ENCODE measurements at regions of chr2 and their contacts with region 1.

Region 1: GRCh38 chr2:190648289-190649034 is 421 bp upstream of the NAB1 start:
- DNase-seq: peak; percentile 90 to 91
- H3K4me3 ChIP-seq: peak overlapping the region; percentile 99
- H3K4me3 Mint-ChIP-seq: peak overlapping the region; percentile 91
- H3K27ac Mint-ChIP-seq: peak overlapping the region; percentile 88
- H3K4me1 ChIP-seq: peaks cover 20% of the 10 kb centered on the region
- H3K4me1 Mint-ChIP-seq: peaks cover 16% of the 10 kb centered on the region
- H3K27me3 ChIP-seq: no peaks in the 10 kb centered on the region
- H3K27me3 Mint-ChIP-seq: no peaks in the 10 kb centered on the region
- CTCF ChIP-seq: no peak

Region 2: DNA sequence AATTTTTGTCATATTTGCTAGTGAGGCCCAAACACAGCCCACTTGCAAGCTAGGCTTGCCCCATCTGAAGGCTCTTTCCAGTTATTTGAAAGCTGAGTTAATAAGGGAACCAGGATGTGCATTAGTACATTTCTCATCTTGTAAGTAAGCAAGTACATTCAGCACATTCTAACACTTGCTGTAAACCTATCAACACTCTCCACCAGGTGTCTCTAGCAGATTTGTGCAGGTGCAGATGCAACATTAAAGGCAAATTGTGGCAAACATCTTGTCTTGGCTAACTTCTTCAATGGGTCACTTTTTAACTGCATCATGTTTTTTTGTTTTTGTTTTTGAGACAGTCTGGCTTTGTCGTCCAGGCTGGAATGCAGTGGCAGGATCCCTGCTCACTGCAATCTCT is 265.6 kb before region 1 on chr2:
- CTCF ChIA-PET with region 1: no interaction called
- POLR2A ChIA-PET with region 1: no interaction called
- intact Hi-C with region 1: loop called (anchors 10 kb)
- DNase-seq: peak; percentile 48 to 61
- H3K4me3 ChIP-seq: no peak overlapping the region
- H3K4me3 Mint-ChIP-seq: no peak overlapping the region
- H3K27ac Mint-ChIP-seq: no peak overlapping the region
- H3K4me1 ChIP-seq: peaks cover 13% of the 10 kb centered on the region
- H3K4me1 Mint-ChIP-seq: peaks cover 7% of the 10 kb centered on the region
- H3K27me3 ChIP-seq: no peaks in the 10 kb centered on the region
- H3K27me3 Mint-ChIP-seq: no peaks in the 10 kb centered on the region
- CTCF ChIP-seq: peak; percentile 60 to 75

Region 3: DNA sequence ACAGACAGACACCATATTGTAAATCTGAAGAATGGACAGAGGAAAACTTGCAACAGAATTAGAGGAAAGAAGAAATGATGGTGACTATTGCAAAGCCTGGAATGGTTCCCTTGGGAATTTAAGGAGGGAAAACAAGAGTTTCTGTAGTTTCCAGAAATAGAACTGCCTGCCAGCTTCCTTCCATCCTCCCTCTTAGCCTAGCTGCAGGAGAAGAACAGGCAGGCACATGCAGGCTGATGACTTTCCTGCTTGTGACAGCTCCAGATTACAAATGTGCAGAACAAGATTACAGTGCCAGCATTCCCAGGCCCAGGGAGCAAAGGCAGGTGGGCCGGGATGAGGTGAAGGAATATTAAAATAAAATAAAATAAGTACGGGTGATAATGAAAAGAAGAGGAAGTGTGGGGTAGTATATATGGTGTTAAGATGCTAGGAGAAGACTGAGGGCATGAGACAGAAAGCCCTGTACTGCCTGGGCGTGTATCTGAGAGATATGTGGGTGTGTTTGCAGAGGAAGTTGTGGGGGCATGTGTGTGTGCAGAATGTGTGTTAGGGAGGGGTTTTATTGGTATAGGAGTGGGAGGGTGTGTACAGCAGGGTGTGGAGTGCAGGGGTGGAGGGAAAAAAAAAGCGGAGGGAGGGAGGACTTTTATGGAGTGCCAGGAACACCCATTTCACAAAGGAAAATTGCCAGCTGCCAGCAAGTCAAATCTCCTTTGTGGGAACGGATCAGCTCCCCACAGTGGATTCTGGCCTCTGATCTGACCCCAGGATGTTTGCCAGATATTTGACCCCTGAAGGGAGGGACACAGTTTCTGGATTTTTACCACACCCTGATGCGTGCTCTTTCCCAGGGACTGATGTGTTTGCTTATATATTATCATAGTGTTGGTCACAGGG is 70.1 kb before region 1 on chr2:
- CTCF ChIA-PET with region 1: no interaction called
- POLR2A ChIA-PET with region 1: no interaction called
- intact Hi-C with region 1: loop called (anchors 1 kb)
- DNase-seq: peak; percentile 74 to 91
- H3K4me3 ChIP-seq: no peak overlapping the region
- H3K4me3 Mint-ChIP-seq: peak overlapping the region; percentile 56
- H3K27ac Mint-ChIP-seq: peak overlapping the region; percentile 65
- H3K4me1 ChIP-seq: peaks cover 36% of the 10 kb centered on the region
- H3K4me1 Mint-ChIP-seq: peaks cover 33% of the 10 kb centered on the region
- H3K27me3 ChIP-seq: no peaks in the 10 kb centered on the region
- H3K27me3 Mint-ChIP-seq: no peaks in the 10 kb centered on the region
- CTCF ChIP-seq: no peak

Region 4: GRCh38 chr2:190618030-190618429 is 30.4 kb before region 1 on chr2:
- CTCF ChIA-PET with region 1: no interaction called
- POLR2A ChIA-PET with region 1: interaction called, 5 read pairs
- intact Hi-C with region 1: loop called (anchors 1 kb)
- DNase-seq: peak; percentile 65 to 73
- H3K4me3 ChIP-seq: no peak overlapping the region
- H3K4me3 Mint-ChIP-seq: peak overlapping the region; percentile 12
- H3K27ac Mint-ChIP-seq: peak overlapping the region; percentile 15
- H3K4me1 ChIP-seq: peaks cover 27% of the 10 kb centered on the region
- H3K4me1 Mint-ChIP-seq: peaks cover 26% of the 10 kb centered on the region
- H3K27me3 ChIP-seq: no peaks in the 10 kb centered on the region
- H3K27me3 Mint-ChIP-seq: no peaks in the 10 kb centered on the region
- CTCF ChIP-seq: no peak

Region 5: GRCh38 chr2:190679813-190680591 is 31.5 kb after region 1 on chr2:
- CTCF ChIA-PET with region 1: no interaction called
- POLR2A ChIA-PET with region 1: no interaction called
- intact Hi-C with region 1: loop called (anchors 2 kb)
- DNase-seq: peak; percentile 70 to 71
- H3K4me3 ChIP-seq: no peak overlapping the region
- H3K4me3 Mint-ChIP-seq: peak overlapping the region; percentile 18
- H3K27ac Mint-ChIP-seq: peak overlapping the region; percentile 77
- H3K4me1 ChIP-seq: peaks cover 16% of the 10 kb centered on the region
- H3K4me1 Mint-ChIP-seq: peaks cover 34% of the 10 kb centered on the region
- H3K27me3 ChIP-seq: no peaks in the 10 kb centered on the region
- H3K27me3 Mint-ChIP-seq: no peaks in the 10 kb centered on the region
- CTCF ChIP-seq: peak; percentile 59 to 66

Region 6: GRCh38 chr2:191128172-191128910 is 479.9 kb after region 1 on chr2:
- CTCF ChIA-PET with region 1: no interaction called
- POLR2A ChIA-PET with region 1: no interaction called
- intact Hi-C with region 1: no loop called
- DNase-seq: no peak
- H3K4me3 ChIP-seq: no peak overlapping the region
- H3K4me3 Mint-ChIP-seq: no peak overlapping the region
- H3K27ac Mint-ChIP-seq: no peak overlapping the region
- H3K4me1 ChIP-seq: no peaks in the 10 kb centered on the region
- H3K4me1 Mint-ChIP-seq: no peaks in the 10 kb centered on the region
- H3K27me3 ChIP-seq: no peaks in the 10 kb centered on the region
- H3K27me3 Mint-ChIP-seq: no peaks in the 10 kb centered on the region
- CTCF ChIP-seq: no peak

Measured in Caco-2 (cell line).